Endothelial cell of umbilical vein (primary cell): ENCODE measurements at regions of chr9 and their contacts with region 1.

Region 1: GRCh38 chr9:32395490-32396216 is 11.2 kb downstream of the ACO1 start:
- DNase-seq: peak; percentile 95
- H3K4me3 ChIP-seq: no peak overlapping the region
- H3K27ac ChIP-seq: peak overlapping the region; percentile 60
- H3K4me1 ChIP-seq: peaks cover 29% of the 10 kb centered on the region
- H3K27me3 ChIP-seq: no peaks in the 10 kb centered on the region
- CTCF ChIP-seq: peak; percentile 20 to 46
- POLR2A ChIP-seq: peak; percentile 31

Region 2: DNA sequence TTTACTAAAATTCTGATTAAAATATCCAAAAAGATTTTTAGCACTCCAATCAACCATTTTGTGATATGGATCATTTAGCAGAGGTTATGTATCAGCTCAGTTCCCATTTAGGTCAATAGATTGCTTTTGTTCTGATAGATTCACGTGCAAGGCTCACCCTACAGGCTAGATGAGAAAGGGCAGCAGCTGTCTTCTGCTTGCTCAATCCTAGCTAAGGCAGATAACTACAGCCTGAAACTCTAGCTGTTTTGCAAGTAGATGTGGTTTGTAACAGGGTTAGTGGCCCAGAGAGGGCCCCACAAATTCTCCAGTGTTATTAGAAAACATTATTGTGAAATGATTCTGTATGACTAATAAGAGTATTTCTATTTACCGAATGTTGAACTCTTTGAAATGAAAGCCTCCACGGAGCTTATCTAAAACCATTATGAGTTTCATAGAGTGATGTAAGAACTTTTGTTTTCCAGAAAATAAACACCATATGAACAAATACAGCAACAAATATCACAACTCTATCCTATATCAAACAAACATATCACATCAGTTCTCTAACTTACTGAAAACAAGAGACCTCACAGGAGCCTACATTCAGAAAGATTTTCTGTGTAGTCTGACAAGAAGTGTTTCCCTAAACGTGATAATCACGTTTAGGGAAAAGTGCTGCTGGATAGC is 853.1 kb before region 1 on chr9:
- CTCF ChIA-PET with region 1: no interaction called
- POLR2A ChIA-PET with region 1: no interaction called
- dilution Hi-C with region 1: no loop called
- intact Hi-C with region 1: no loop called
- DNase-seq: peak; percentile 29
- H3K4me3 ChIP-seq: no peak overlapping the region
- H3K27ac ChIP-seq: no peak overlapping the region
- H3K4me1 ChIP-seq: no peaks in the 10 kb centered on the region
- H3K27me3 ChIP-seq: no peaks in the 10 kb centered on the region
- CTCF ChIP-seq: peak in 1 of 2 donors; percentile 27
- POLR2A ChIP-seq: no peak

Region 3: GRCh38 chr9:31674264-31674663 is 721.4 kb before region 1 on chr9:
- CTCF ChIA-PET with region 1: no interaction called
- POLR2A ChIA-PET with region 1: no interaction called
- dilution Hi-C with region 1: no loop called
- intact Hi-C with region 1: no loop called
- DNase-seq: no peak
- H3K4me3 ChIP-seq: no peak overlapping the region
- H3K27ac ChIP-seq: no peak overlapping the region
- H3K4me1 ChIP-seq: peaks cover 7% of the 10 kb centered on the region
- H3K27me3 ChIP-seq: no peaks in the 10 kb centered on the region
- CTCF ChIP-seq: no peak
- POLR2A ChIP-seq: no peak

Region 4: DNA sequence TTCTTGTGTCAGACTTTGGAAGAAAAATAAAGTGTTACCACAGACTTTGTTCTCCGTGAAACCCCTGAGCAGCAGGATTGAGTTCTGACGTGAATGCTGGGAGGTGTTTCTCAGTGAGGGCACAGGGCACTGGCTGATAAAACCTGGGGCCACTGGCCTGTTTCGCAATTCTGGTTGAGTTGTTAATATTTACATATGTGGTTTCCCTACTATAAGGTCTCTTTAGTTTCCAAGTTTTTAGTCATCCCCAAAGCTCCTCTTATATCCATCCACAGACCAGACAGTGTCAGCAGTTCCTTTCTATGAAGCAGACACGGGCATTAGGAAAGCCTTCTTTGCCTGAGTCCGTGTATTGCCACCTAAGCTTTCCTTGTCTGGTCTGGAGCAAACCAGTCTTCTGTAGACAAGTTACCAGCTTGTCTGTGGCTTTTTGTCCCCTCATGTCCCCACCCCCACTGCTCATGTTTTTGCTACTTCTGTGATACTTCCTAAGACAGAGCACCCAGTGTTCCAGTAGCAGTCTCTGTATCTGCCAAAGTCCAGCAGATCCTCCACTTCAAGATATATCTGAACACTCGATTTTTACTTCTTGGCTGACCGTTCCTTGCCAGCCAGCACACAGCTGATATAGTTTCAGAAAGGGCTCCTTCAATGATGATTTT is 30.8 kb after region 1 on chr9:
- CTCF ChIA-PET with region 1: interaction called, 21 read pairs
- POLR2A ChIA-PET with region 1: no interaction called
- dilution Hi-C with region 1: no loop called
- intact Hi-C with region 1: loop called (anchors 1 kb)
- DNase-seq: no peak
- H3K4me3 ChIP-seq: no peak overlapping the region
- H3K27ac ChIP-seq: no peak overlapping the region
- H3K4me1 ChIP-seq: peaks cover 50% of the 10 kb centered on the region
- H3K27me3 ChIP-seq: no peaks in the 10 kb centered on the region
- CTCF ChIP-seq: no peak
- POLR2A ChIP-seq: no peak

Region 5: DNA sequence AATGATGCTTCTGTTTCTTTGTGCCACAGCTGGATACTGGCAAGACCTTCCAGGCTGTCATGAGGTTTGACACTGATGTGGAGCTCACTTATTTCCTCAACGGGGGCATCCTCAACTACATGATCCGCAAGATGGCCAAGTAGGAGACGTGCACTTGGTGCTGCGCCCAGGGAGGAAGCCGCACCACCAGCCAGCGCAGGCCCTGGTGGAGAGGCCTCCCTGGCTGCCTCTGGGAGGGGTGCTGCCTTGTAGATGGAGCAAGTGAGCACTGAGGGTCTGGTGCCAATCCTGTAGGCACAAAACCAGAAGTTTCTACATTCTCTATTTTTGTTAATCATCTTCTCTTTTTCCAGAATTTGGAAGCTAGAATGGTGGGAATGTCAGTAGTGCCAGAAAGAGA is 54.3 kb after region 1 on chr9:
- CTCF ChIA-PET with region 1: no interaction called
- POLR2A ChIA-PET with region 1: no interaction called
- dilution Hi-C with region 1: no loop called
- intact Hi-C with region 1: no loop called
- DNase-seq: no peak
- H3K4me3 ChIP-seq: no peak overlapping the region
- H3K27ac ChIP-seq: no peak overlapping the region
- H3K4me1 ChIP-seq: no peaks in the 10 kb centered on the region
- H3K27me3 ChIP-seq: no peaks in the 10 kb centered on the region
- CTCF ChIP-seq: no peak
- POLR2A ChIP-seq: no peak